ENCODE measurements at regions of chr7 and their contacts with region 1.

Region 1: DNA sequence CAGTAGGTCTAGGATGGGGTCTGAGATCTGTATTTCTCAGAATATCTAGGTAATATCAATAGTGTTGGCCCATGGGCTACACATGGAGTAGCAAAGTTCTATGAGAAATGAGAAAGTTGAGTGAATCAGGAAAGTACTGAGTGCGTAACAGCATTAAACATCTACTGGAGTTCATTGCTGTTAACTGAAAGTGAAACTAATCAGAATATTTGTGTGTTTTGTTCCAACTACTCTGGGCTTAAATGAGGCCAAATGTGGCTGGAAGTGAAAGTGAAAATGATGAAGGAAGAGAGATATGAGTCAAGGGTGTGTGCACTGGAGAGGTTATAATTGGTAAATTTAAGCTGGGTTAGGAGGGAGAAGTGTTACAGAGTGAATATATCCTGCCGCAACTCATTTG is 46.5 kb downstream of the TMEM106B start:
- DNase-seq: peak; percentile 30
- ATAC-seq: peak; percentile 95
- H3K4me3 Mint-ChIP-seq: no peak overlapping the region
- H3K27ac Mint-ChIP-seq: no peak overlapping the region
- H3K4me1 Mint-ChIP-seq: peaks cover 8% of the 10 kb centered on the region
- H3K27me3 Mint-ChIP-seq: no peaks in the 10 kb centered on the region

Region 2: GRCh38 chr7:12067141-12067831 is 190.3 kb before region 1 on chr7:
- CTCF ChIA-PET with region 1: no interaction called
- POLR2A ChIA-PET with region 1: no interaction called
- intact Hi-C with region 1: loop called (anchors 1 kb)
- DNase-seq: peak; percentile 68
- ATAC-seq: peak; percentile 27
- H3K4me3 Mint-ChIP-seq: no peak overlapping the region
- H3K27ac Mint-ChIP-seq: no peak overlapping the region
- H3K4me1 Mint-ChIP-seq: peaks cover 19% of the 10 kb centered on the region
- H3K27me3 Mint-ChIP-seq: no peaks in the 10 kb centered on the region